ENCODE measurements at regions of chr19 and their contacts with region 1.

Region 1: GRCh38 chr19:40348125-40348913 is at the starts of genes C19orf47 and PLD3:
- DNase-seq: peak; percentile 99
- ATAC-seq: peak; percentile 97
- H3K4me3 Mint-ChIP-seq: peak within 1 kb of the TSS; percentile 90
- H3K27ac Mint-ChIP-seq: peak within 1 kb of the TSS; percentile 94
- H3K4me1 Mint-ChIP-seq: peaks cover 11% of the 10 kb centered on the region
- H3K27me3 Mint-ChIP-seq: no peaks in the 10 kb centered on the region
- CTCF ChIP-seq: no peak
- total RNA-seq, gene C19orf47: 14.7 to 17.2 TPM (median 15.6 TPM) in 3 replicates
- total RNA-seq, gene PLD3: 190 to 200 TPM (median 193 TPM) in 3 replicates

Region 2: GRCh38 chr19:40331069-40331468 is 17.2 kb before region 1 on chr19:
- CTCF ChIA-PET with region 1: no interaction called
- POLR2A ChIA-PET with region 1: interaction called, 10 read pairs
- DNase-seq: no peak
- ATAC-seq: no peak
- H3K4me3 Mint-ChIP-seq: no peak overlapping the region
- H3K27ac Mint-ChIP-seq: no peak overlapping the region
- H3K4me1 Mint-ChIP-seq: no peaks in the 10 kb centered on the region
- H3K27me3 Mint-ChIP-seq: no peaks in the 10 kb centered on the region
- CTCF ChIP-seq: no peak

Measured in WTC11 (cell line).